ENCODE measurements at regions of chr6 and their contacts with region 1.

Region 1: DNA sequence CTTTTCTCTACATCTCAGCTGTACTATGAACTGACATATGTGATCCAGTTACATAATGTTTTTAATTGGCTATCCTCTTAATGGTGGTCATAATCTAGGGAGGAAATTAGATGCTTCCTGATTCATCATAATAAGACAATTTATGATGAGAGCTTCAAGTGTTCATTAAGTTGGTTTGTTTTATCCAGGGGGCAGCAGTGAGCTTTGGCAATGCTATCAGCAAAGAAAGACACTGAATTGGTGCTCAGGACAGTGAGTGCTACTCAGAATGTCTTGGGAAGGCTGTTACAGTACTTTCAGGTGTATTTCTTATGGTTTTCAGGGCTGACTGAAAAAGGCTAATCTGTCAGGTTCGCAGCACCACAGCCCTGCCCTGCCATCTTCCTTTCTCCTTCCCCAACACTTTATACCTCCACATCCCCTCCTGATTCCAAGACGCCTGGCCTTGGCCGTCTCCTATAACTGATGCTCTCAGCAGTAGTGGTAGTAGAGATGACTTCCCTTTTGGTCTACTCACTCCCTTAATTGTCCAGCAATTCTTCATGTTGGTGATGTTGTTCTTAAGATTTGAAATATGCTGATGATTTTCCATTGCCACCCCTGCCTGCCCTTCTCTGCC is 67.0 kb upstream of the TNFAIP3 start:
- DNase-seq: peak in 34 of 35 experiments; percentile 32 to 92 (median 70)
- ATAC-seq: peak; percentile 65 to 80 (median 73)
- H3K4me3 ChIP-seq: no peak overlapping the region
- H3K4me3 Mint-ChIP-seq: peak overlapping the region in 1 of 3 donors; percentile 15
- H3K27ac ChIP-seq: peak overlapping the region; percentile 30
- H3K27ac Mint-ChIP-seq: peak overlapping the region; percentile 80 to 82
- H3K4me1 ChIP-seq: peaks cover 23 to 27% of the 10 kb centered on the region in 2 experiments
- H3K4me1 Mint-ChIP-seq: peaks cover 55 to 70% (median 61%) of the 10 kb centered on the region in 3 donors
- H3K27me3 ChIP-seq: no peaks in the 10 kb centered on the region
- H3K27me3 Mint-ChIP-seq: no peaks in the 10 kb centered on the region

Region 2: GRCh38 chr6:137707590-137708360 is 92.3 kb before region 1 on chr6:
- CTCF ChIA-PET with region 1: interaction called, 6 to 26 read pairs
- POLR2A ChIA-PET with region 1: interaction called in 1 of 2 experiments, 10 read pairs
- DNase-seq: peak; percentile 57 to 96 (median 88)
- ATAC-seq: peak; percentile 76 to 83 (median 80)
- H3K4me3 ChIP-seq: no peak overlapping the region
- H3K4me3 Mint-ChIP-seq: peak overlapping the region; percentile 44 to 71 (median 55)
- H3K27ac ChIP-seq: peak overlapping the region; percentile 90
- H3K27ac Mint-ChIP-seq: peak overlapping the region; percentile 96 to 98
- H3K4me1 ChIP-seq: peaks cover 19 to 48% of the 10 kb centered on the region in 2 experiments
- H3K4me1 Mint-ChIP-seq: peaks cover 45 to 68% (median 57%) of the 10 kb centered on the region in 3 donors
- H3K27me3 ChIP-seq: no peaks in the 10 kb centered on the region
- H3K27me3 Mint-ChIP-seq: no peaks in the 10 kb centered on the region

Region 3: GRCh38 chr6:137811121-137811915 is 11.3 kb after region 1 on chr6:
- CTCF ChIA-PET with region 1: interaction called, 5 to 12 read pairs
- POLR2A ChIA-PET with region 1: interaction called, 3 to 4 read pairs
- DNase-seq: peak; percentile 23 to 94 (median 71)
- ATAC-seq: peak; percentile 88 to 99 (median 98)
- H3K4me3 ChIP-seq: peak overlapping the region in 1 of 2 donors; percentile 23
- H3K4me3 Mint-ChIP-seq: peak overlapping the region; percentile 21 to 62 (median 38)
- H3K27ac ChIP-seq: peak overlapping the region; percentile 92
- H3K27ac Mint-ChIP-seq: peak overlapping the region; percentile 81 to 95
- H3K4me1 ChIP-seq: peaks cover 9 to 20% of the 10 kb centered on the region in 2 experiments
- H3K4me1 Mint-ChIP-seq: peaks cover 47 to 69% (median 48%) of the 10 kb centered on the region in 3 donors
- H3K27me3 ChIP-seq: no peaks in the 10 kb centered on the region
- H3K27me3 Mint-ChIP-seq: no peaks in the 10 kb centered on the region

Region 4: DNA sequence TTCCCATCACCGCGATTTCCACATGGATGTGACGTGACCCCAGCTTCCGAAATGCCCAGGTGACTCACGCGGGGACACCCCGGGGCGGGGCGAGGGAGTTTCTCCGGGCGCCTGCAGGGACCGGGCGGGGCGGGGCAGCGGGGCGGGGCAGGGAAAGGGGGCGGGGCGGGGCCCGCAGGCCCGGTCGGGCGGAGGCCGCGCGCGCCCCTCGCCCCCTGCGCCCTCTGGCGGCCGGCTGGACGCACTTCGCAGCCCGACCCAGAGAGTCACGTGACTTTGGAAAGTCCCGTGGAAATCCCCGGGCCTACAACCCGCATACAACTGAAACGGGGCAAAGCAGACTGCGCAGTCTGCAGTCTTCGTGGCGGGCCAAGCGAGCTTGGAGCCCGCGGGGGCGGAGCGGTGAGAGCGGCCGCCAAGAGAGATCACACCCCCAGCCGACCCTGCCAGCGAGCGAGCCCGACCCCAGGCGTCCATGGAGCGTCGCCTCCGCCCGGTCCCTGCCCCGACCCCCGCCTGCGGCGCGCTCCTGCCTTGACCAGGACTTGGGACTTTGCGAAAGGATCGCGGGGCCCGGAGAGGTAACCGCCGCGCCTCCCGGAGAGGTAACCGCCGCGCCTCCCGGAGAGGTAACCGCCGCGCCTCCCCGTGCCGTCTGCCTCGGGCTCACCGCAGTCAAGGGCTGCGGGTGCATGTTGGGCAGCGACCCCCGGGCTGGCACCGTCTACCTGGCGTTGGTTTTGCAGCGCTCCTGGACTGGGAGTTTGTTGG is 67.0 kb after region 1 on chr6 and contains the start of gene TNFAIP3:
- CTCF ChIA-PET with region 1: interaction called, 5 to 29 read pairs
- POLR2A ChIA-PET with region 1: interaction called, 6 to 31 read pairs
- DNase-seq: peak; percentile 88 to 99 (median 93)
- ATAC-seq: peak; percentile 78 to 86 (median 82)
- H3K4me3 ChIP-seq: peak within 1 kb of the TSS; percentile 90 to 100
- H3K4me3 Mint-ChIP-seq: peak within 1 kb of the TSS; percentile 92 to 98 (median 96)
- H3K27ac ChIP-seq: peak within 1 kb of the TSS; percentile 99
- H3K27ac Mint-ChIP-seq: peak within 1 kb of the TSS; percentile 95 to 98
- H3K4me1 ChIP-seq: peaks cover 30 to 37% of the 10 kb centered on the region in 2 experiments
- H3K4me1 Mint-ChIP-seq: peaks cover 61 to 69% (median 64%) of the 10 kb centered on the region in 3 donors
- H3K27me3 ChIP-seq: no peaks in the 10 kb centered on the region
- H3K27me3 Mint-ChIP-seq: no peaks in the 10 kb centered on the region
- total RNA-seq, gene TNFAIP3: 109 to 2,994 (median 145) TPM

Region 5: GRCh38 chr6:137896647-137897046 is 96.6 kb after region 1 on chr6:
- CTCF ChIA-PET with region 1: no interaction called
- POLR2A ChIA-PET with region 1: interaction called in 1 of 2 experiments, 11 read pairs
- DNase-seq: no peak
- ATAC-seq: no peak
- H3K4me3 ChIP-seq: no peak overlapping the region
- H3K4me3 Mint-ChIP-seq: no peak overlapping the region
- H3K27ac ChIP-seq: no peak overlapping the region
- H3K27ac Mint-ChIP-seq: no peak overlapping the region
- H3K4me1 ChIP-seq: no peaks in the 10 kb centered on the region
- H3K4me1 Mint-ChIP-seq: peaks cover 0 to 4% (median 0%) of the 10 kb centered on the region in 3 donors
- H3K27me3 ChIP-seq: no peaks in the 10 kb centered on the region
- H3K27me3 Mint-ChIP-seq: no peaks in the 10 kb centered on the region

Region 6: DNA sequence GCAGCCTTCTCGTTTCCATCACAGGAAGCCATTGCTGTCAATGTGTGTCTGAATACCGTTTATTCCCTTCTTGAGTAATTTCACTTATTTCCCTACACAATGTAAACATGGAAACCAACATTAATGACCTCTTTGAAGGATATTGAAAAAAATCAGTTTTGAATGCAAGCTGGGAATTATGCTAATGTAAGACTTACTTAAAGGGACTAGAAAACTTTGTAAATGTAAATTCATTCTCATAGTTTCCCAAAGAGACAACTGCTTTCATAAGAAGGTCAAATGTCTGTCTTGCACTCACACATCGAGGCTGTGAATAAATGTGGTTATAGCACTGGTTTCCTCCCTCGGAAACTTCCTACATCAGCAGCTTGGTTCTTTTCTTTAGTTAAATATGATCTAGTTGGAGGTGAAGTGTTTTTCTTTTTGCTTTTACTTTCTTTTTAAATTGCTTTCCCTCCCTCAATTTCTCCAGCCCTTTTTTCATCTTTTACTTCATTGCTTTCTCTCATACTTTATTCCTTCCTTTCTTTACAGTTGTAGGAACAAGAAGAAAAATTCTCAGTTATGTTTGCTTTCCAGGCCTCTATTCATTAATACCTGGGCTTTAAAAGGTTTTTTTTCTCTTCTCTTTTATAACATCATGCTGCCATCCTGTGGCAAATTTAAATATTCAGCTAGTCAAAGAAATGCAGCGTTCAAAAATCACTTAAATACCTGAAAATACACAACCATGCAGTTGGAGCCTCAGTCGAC is 175.3 kb after region 1 on chr6:
- CTCF ChIA-PET with region 1: interaction called, 3 to 10 read pairs
- POLR2A ChIA-PET with region 1: no interaction called
- DNase-seq: peak in 14 of 35 experiments; percentile 6 to 78 (median 20)
- ATAC-seq: peak; percentile 64 to 91 (median 77)
- H3K4me3 ChIP-seq: no peak overlapping the region
- H3K4me3 Mint-ChIP-seq: peak overlapping the region; percentile 67 to 71 (median 67)
- H3K27ac ChIP-seq: peak overlapping the region; percentile 93
- H3K27ac Mint-ChIP-seq: peak overlapping the region; percentile 96 to 97
- H3K4me1 ChIP-seq: peaks cover 19 to 39% of the 10 kb centered on the region in 2 experiments
- H3K4me1 Mint-ChIP-seq: peaks cover 34 to 43% (median 42%) of the 10 kb centered on the region in 3 donors
- H3K27me3 ChIP-seq: no peaks in the 10 kb centered on the region
- H3K27me3 Mint-ChIP-seq: no peaks in the 10 kb centered on the region

Measured in T-cell (primary cell).